ENCODE measurements at regions of chr16 and their contacts with region 1.

Region 1: GRCh38 chr16:66483689-66484481 is 56.8 kb downstream of the BEAN1 start:
- DNase-seq: peak; percentile 85
- CTCF ChIP-seq: peak; percentile 99

Region 2: DNA sequence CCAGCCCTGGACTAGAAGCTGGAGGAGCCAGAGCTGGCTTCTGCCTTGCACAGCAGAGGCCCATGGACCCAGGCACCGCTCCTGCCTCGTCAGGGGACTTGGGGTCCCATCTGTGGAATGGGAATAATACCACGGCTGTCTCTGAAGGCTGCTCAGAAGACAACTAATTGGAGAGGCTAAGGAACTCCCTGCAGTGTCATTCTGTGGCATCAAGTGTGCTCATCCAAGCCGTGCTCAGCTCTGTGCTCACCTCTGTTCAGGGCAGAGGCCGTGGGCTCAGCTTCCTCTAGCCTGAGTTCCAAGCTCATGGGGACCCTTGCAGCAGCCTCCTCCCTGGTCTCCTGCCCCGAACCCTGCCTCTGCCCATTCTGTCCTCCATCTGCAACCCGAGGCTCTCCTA is 25.0 kb before region 1 on chr16:
- CTCF ChIA-PET with region 1: no interaction called
- POLR2A ChIA-PET with region 1: no interaction called
- DNase-seq: no peak
- CTCF ChIP-seq: no peak

Region 3: GRCh38 chr16:66469291-66469946 is 14.5 kb before region 1 on chr16:
- CTCF ChIA-PET with region 1: interaction called, 12 read pairs
- POLR2A ChIA-PET with region 1: no interaction called
- DNase-seq: no peak
- CTCF ChIP-seq: no peak

Region 4: GRCh38 chr16:66511615-66512500 is 28.0 kb after region 1 on chr16:
- CTCF ChIA-PET with region 1: interaction called, 13 read pairs
- POLR2A ChIA-PET with region 1: no interaction called
- DNase-seq: no peak
- CTCF ChIP-seq: no peak